ENCODE measurements at regions of chr1 and their contacts with region 1.

Region 1: GRCh38 chr1:113490384-113490783 is 100.1 kb downstream of the MAGI3 start:
- DNase-seq: no peak

Region 2: DNA sequence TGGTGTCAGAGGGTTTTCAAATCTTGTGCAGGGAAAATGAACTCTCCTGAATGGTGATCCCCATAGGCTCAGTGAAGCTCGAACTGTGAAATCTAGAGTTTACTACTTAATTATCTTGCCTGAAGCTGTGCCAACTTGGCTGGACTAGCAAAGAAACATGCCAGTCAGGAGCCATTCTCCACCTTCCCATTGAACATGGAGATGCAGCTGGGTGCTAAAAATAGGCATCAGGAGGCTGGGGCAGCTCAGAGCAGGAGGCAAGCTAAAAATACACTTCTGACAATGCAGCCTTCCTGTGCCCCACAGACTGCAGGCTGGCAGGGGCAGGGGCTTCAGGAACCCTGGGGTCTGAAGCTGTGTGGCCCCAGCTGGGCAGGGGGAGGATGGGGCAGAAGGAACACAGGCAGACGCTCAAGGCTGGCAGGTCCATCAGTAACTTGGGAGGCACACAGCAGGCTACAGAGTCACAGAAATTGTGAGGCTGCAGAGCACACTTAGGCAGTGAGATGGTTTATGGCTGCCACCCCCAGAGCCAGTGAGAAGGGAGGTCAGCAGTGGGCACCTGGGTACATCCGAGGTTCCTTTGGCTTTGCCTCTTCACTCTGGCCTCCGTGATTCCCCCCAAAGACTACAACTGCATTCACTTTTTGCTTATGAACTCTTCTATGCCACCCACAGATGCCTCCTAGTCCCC is 1345.5 kb before region 1 on chr1:
- intact Hi-C with region 1: loop called in 1 of 2 experiments (anchors 10 kb)
- DNase-seq: no peak

Region 3: DNA sequence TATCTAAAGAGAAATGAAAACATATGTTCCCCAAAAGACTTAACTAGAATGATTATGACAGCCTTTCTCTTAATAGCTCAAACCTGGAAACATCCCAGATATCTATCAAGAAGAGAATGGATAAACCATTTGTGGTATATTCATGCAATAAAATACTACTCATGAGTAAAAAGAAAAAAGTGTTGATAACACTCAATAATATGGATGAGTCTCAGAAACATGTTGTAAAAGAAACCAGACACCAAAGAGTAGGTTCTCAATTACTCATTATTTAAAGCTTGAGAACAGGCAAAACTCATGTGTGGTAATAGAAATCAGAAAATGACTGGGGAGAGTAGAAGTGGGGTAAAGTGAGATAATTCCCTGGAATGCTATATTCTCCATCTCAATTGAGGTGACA is 114.8 kb after region 1 on chr1:
- intact Hi-C with region 1: no loop called
- DNase-seq: no peak

Region 4: GRCh38 chr1:115402753-115403184 is 1912.4 kb after region 1 on chr1:
- intact Hi-C with region 1: no loop called
- DNase-seq: peak; percentile 79

Measured in posterior vena cava (tissue), 2 donors.